Activated B cell treated with CpG ODN at 0.5 μM for 24 hours (primary cell): ENCODE measurements at regions of chr1 and their contacts with region 1.

Region 1: GRCh38 chr1:183590244-183591191 is at the start of gene NCF2:
- DNase-seq: peak; percentile 55
- ATAC-seq: peak; percentile 78
- H3K4me3 Mint-ChIP-seq: peak within 1 kb of the TSS; percentile 88
- H3K27ac Mint-ChIP-seq: peak within 1 kb of the TSS; percentile 92
- H3K4me1 Mint-ChIP-seq: peaks cover 73% of the 10 kb centered on the region
- H3K27me3 Mint-ChIP-seq: no peaks in the 10 kb centered on the region
- CTCF ChIP-seq: no peak
- total RNA-seq, gene NCF2: 101 TPM in 2 replicates

Region 2: DNA sequence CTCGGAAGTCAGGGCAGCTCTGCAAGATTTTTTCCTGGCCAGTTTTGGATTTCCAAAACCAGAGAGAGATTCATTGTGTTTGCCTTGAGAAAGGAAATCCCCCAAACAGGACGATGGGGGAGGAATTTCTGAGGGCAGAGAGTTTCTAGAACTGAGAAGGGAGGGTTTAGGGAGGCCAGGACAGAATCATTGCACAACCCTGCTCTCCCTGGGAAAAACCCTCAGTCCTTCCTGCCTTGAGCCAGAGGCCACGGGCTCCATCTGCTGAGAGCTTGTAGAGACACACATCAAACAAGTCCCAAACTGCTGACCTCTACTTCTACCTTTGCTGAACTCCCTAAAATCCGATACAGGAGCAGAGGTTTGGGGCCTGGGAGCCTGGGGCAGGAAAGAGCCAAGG is 272.1 kb before region 1 on chr1:
- CTCF ChIA-PET with region 1: no interaction called
- POLR2A ChIA-PET with region 1: no interaction called
- intact Hi-C with region 1: no loop called
- DNase-seq: no peak
- ATAC-seq: no peak
- H3K4me3 Mint-ChIP-seq: no peak overlapping the region
- H3K27ac Mint-ChIP-seq: no peak overlapping the region
- H3K4me1 Mint-ChIP-seq: no peaks in the 10 kb centered on the region
- H3K27me3 Mint-ChIP-seq: peaks cover 20% of the 10 kb centered on the region
- CTCF ChIP-seq: no peak

Region 3: DNA sequence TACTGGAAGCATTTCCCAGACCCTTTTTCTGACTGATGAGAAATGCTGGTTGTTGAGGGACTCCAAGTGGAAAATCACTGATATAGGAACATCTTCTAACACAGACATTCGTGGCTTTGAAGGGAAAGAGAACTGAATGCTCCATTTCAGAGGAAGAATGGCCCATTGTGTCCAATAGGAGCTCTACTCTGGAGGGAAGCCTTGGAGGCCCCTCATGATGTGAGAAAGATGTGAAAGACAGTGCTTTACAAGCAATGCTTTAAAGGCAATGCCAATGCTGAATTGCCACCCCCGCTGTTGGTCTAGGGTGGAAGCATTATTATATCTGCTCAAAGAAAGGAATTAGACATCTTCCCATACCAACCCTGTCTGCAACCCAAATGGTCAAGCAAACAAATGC is 186.1 kb before region 1 on chr1:
- CTCF ChIA-PET with region 1: no interaction called
- POLR2A ChIA-PET with region 1: no interaction called
- intact Hi-C with region 1: no loop called
- DNase-seq: no peak
- ATAC-seq: no peak
- H3K4me3 Mint-ChIP-seq: no peak overlapping the region
- H3K27ac Mint-ChIP-seq: no peak overlapping the region
- H3K4me1 Mint-ChIP-seq: no peaks in the 10 kb centered on the region
- H3K27me3 Mint-ChIP-seq: peaks cover 34% of the 10 kb centered on the region
- CTCF ChIP-seq: no peak

Region 4: DNA sequence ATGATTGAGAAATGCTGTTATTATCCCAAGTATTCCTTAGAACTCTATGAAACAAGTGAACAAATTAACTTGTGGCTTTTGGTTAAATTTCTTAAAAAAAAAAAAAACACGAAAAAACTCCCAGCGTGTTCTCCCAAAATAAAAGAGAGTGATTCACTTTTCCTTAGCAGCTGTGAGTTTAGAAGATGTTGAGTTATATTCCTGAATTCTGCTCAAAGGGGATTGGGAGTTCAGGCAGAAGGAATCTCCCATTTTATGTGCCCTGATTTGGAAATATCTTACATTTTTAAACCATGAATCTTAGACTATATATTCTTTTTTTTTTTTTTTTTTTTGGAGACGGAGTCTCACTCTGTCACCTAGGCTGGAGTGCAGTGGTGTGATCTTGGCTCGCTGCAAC is 84.0 kb before region 1 on chr1:
- CTCF ChIA-PET with region 1: no interaction called
- POLR2A ChIA-PET with region 1: no interaction called
- intact Hi-C with region 1: no loop called
- DNase-seq: no peak
- ATAC-seq: no peak
- H3K4me3 Mint-ChIP-seq: no peak overlapping the region
- H3K27ac Mint-ChIP-seq: no peak overlapping the region
- H3K4me1 Mint-ChIP-seq: peaks cover 11% of the 10 kb centered on the region
- H3K27me3 Mint-ChIP-seq: no peaks in the 10 kb centered on the region
- CTCF ChIP-seq: no peak

Region 5: GRCh38 chr1:183554577-183554976 is 35.9 kb before region 1 on chr1:
- CTCF ChIA-PET with region 1: no interaction called
- POLR2A ChIA-PET with region 1: interaction called, 10 read pairs
- intact Hi-C with region 1: no loop called
- DNase-seq: no peak
- ATAC-seq: peak; percentile 69
- H3K4me3 Mint-ChIP-seq: no peak overlapping the region
- H3K27ac Mint-ChIP-seq: peak overlapping the region; percentile 32
- H3K4me1 Mint-ChIP-seq: peaks cover 21% of the 10 kb centered on the region
- H3K27me3 Mint-ChIP-seq: no peaks in the 10 kb centered on the region
- CTCF ChIP-seq: no peak

Region 6: DNA sequence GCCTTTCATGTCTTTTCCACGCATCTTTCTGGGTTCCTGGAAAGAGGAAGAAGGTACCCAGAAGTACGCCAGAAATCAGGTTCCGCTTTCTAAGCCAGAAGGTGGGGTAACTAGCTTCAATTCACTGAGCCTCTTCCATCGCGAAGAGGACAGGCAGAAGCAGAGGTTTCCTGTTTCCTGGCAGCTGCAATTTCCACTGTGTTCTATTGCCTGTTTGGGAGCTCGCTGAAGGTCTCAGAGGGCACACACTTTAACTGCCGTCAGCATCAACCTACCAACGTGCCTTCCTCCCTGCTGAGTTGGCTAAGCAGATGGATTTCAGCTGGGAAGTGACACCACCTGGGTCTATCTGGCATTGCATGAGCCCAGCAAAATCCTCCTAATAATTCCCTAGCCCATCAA is 10.2 kb before region 1 on chr1:
- CTCF ChIA-PET with region 1: interaction called, 24 read pairs
- POLR2A ChIA-PET with region 1: interaction called, 80 read pairs
- intact Hi-C with region 1: loop called (anchors 1 kb)
- DNase-seq: no peak
- ATAC-seq: peak; percentile 86
- H3K4me3 Mint-ChIP-seq: peak overlapping the region; percentile 61
- H3K27ac Mint-ChIP-seq: peak overlapping the region; percentile 85
- H3K4me1 Mint-ChIP-seq: peaks cover 32% of the 10 kb centered on the region
- H3K27me3 Mint-ChIP-seq: no peaks in the 10 kb centered on the region
- CTCF ChIP-seq: no peak

Region 7: DNA sequence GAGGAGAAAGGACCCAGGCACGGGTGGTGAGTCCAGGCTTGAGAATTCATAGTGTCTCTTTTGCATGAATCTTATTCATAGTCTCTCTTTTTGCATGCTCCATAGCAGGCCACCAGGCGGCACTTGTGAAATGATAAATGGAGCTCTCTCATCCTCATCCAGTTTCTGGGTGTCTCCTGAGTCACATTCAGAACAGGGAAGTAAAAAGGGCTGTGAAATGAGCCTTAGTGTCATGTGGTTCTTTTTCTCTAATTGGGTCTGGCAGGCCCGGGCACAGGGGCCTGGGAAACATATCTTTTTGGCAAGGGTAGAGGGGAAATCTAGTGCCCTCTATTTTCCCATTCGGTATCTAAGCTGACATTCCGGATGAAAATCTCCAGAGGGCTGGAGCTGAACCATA is 18.8 kb after region 1 on chr1:
- CTCF ChIA-PET with region 1: interaction called, 4 read pairs
- POLR2A ChIA-PET with region 1: interaction called, 57 read pairs
- intact Hi-C with region 1: loop called (anchors 1 kb)
- DNase-seq: no peak
- ATAC-seq: peak; percentile 73
- H3K4me3 Mint-ChIP-seq: peak overlapping the region; percentile 48
- H3K27ac Mint-ChIP-seq: peak overlapping the region; percentile 89
- H3K4me1 Mint-ChIP-seq: peaks cover 47% of the 10 kb centered on the region
- H3K27me3 Mint-ChIP-seq: no peaks in the 10 kb centered on the region
- CTCF ChIP-seq: no peak

Region 8: GRCh38 chr1:183635606-183636333 is 45.3 kb after region 1 on chr1 and contains the start of gene ARPC5:
- CTCF ChIA-PET with region 1: interaction called, 6 read pairs
- POLR2A ChIA-PET with region 1: interaction called, 47 read pairs
- intact Hi-C with region 1: loop called (anchors 1 kb)
- DNase-seq: peak; percentile 95
- ATAC-seq: peak; percentile 89
- H3K4me3 Mint-ChIP-seq: peak within 1 kb of the TSS; percentile 100
- H3K27ac Mint-ChIP-seq: peak within 1 kb of the TSS; percentile 100
- H3K4me1 Mint-ChIP-seq: peaks cover 46% of the 10 kb centered on the region
- H3K27me3 Mint-ChIP-seq: no peaks in the 10 kb centered on the region
- CTCF ChIP-seq: no peak
- total RNA-seq, gene ARPC5: 193 and 224 TPM in 2 replicates

Region 9: DNA sequence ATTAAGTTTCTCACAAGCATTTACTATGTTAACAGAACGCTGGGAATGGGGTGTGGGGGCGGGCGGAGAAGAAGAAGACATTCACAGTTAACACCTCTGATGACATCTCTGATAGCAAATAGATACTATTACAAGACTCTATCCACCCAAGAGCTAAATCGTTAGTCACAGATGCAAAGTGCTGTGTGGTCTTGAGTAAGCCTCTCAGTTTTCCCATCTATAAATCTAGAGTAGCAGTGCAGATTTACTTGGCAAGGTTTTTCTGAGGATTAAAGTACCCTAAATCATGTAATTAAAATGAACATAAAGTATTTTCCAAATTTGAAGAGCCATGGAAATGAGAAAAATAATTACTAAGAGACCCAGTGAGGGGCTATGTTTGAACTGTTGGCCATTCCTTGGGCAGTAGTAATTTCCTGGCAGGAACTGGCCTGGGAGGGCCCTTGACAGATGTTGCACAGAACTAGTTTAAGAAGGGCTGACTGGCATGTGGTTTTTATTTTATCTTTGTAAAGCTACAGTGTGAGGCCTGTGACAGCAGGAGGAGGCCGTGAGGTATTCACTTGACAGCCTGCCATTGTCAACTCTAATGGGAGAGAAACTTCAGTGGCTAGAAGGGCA is 121.3 kb after region 1 on chr1:
- CTCF ChIA-PET with region 1: no interaction called
- POLR2A ChIA-PET with region 1: no interaction called
- intact Hi-C with region 1: no loop called
- DNase-seq: no peak
- ATAC-seq: no peak
- H3K4me3 Mint-ChIP-seq: no peak overlapping the region
- H3K27ac Mint-ChIP-seq: no peak overlapping the region
- H3K4me1 Mint-ChIP-seq: no peaks in the 10 kb centered on the region
- H3K27me3 Mint-ChIP-seq: no peaks in the 10 kb centered on the region
- CTCF ChIP-seq: no peak